Lower leg skin (tissue), 4 donors: ENCODE measurements at regions of chr18 and their contacts with region 1.

Region 1: GRCh38 chr18:35240664-35241447 is at the start of gene ZNF397:
- DNase-seq: peak; percentile 97 to 99
- H3K4me3 ChIP-seq: peak within 1 kb of the TSS; percentile 87
- CTCF ChIP-seq: no peak
- POLR2A ChIP-seq: peak in 1 of 2 donors; percentile 91
- total RNA-seq, gene ZNF397: 13.2 to 26.9 (median 19.5) TPM

Region 2: GRCh38 chr18:35227254-35227653 is 13.6 kb before region 1 on chr18:
- intact Hi-C with region 1: no loop called
- DNase-seq: no peak
- H3K4me3 ChIP-seq: no peak overlapping the region
- CTCF ChIP-seq: no peak
- POLR2A ChIP-seq: no peak

Region 3: DNA sequence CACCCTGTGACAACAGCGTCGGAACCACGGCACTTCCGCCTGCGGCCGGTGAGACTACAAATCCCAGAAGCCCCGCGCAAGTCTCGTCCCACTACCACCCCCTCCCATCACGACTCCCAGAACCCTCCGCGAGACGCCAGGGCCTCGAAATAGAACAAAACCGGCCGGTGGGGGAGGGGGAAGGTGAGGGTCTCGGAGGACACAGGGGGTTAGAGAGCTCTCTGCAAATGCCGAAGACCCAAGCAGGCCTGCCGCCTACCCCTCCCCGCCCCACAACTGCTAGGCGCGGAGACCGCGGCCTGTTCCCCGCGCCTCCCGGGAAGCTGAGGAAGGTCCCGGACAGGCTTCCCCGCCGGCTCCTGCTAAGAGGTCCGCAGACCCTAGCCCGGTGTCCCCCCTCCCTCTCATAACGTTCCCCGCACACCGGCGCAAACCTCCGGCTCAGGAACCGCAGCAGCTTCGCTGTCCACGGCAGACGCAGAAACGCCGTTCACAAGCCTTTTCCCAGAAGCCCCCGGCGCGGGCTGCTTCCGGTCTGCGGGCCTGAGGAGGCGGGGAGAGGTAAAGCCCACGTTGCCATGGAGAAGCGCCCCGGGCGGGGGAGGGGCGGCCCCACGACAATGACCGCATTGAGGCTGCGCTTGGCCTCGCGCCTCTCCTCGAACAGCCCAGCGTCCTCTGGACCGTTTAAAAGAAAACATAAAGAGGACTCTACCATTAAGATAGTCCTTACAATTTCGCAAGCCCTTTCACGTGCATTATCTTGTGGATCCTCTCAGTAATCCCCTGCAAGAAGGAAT is 103.3 kb after region 1 on chr18 and contains the start of gene ZNF24:
- intact Hi-C with region 1: loop called (anchors 10 kb)
- DNase-seq: peak; percentile 93 to 99
- H3K4me3 ChIP-seq: peak within 1 kb of the TSS; percentile 92
- CTCF ChIP-seq: no peak
- POLR2A ChIP-seq: peak in 1 of 2 donors; percentile 16
- total RNA-seq, gene ZNF24: 27.2 to 32.4 (median 30.6) TPM

Region 4: GRCh38 chr18:35580701-35581539 is 340.1 kb after region 1 on chr18:
- intact Hi-C with region 1: no loop called
- DNase-seq: peak; percentile 50 to 91
- H3K4me3 ChIP-seq: peak overlapping the region; percentile 69
- CTCF ChIP-seq: no peak
- POLR2A ChIP-seq: no peak

Region 5: DNA sequence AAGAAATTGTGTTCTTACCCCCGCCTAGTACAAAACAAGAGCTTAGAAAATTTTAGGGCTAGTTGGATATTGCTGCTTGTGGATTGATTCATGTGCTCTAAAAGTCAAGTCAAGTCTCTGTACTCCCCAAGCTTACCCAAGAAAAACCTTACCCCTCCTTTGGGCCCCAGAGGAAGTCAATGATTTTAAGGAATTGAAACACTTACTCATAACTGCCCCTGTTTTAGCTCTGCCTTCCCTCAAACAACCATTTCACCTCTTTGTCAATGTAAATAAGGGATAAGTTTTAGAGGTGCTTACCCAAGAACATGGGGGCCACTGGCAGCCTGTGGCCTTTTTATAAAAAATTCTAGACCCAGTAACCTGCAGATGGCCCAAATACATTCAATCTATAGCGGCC is 595.0 kb after region 1 on chr18:
- intact Hi-C with region 1: no loop called
- DNase-seq: no peak
- H3K4me3 ChIP-seq: no peak overlapping the region
- CTCF ChIP-seq: no peak
- POLR2A ChIP-seq: no peak